Dorsolateral prefrontal cortex (tissue), 120 donors: ENCODE measurements at regions of chr20 and their contacts with region 1.

Region 1: GRCh38 chr20:17059465-17059864 is 167.4 kb upstream of the PCSK2 start:
- DNase-seq: no peak
- H3K4me3 ChIP-seq: no peak overlapping the region
- H3K27ac ChIP-seq: no peak overlapping the region
- H3K27me3 ChIP-seq: peaks cover 0 to 2% (median 0%) of the 10 kb centered on the region in 45 donors
- CTCF ChIP-seq: no peak

Region 2: GRCh38 chr20:17113379-17113778 is 53.9 kb after region 1 on chr20:
- intact Hi-C with region 1: loop called in 1 of 2 experiments (anchors 10 kb)
- DNase-seq: no peak
- H3K4me3 ChIP-seq: no peak overlapping the region
- H3K27ac ChIP-seq: no peak overlapping the region
- H3K27me3 ChIP-seq: no peaks in the 10 kb centered on the region
- CTCF ChIP-seq: no peak

Region 3: GRCh38 chr20:17179840-17180239 is 120.4 kb after region 1 on chr20:
- intact Hi-C with region 1: loop called in 1 of 2 experiments (anchors 10 kb)
- DNase-seq: no peak
- H3K4me3 ChIP-seq: no peak overlapping the region
- H3K27ac ChIP-seq: no peak overlapping the region
- H3K27me3 ChIP-seq: peaks cover 0 to 5% (median 0%) of the 10 kb centered on the region in 45 donors
- CTCF ChIP-seq: no peak